ENCODE measurements at regions of chr10 and their contacts with region 1.

Region 1: GRCh38 chr10:88932539-88933256 is 19.9 kb downstream of the ACTA2 start:
- DNase-seq: peak; percentile 67
- H3K4me3 ChIP-seq: no peak overlapping the region
- CTCF ChIP-seq: peak; percentile 74

Region 2: GRCh38 chr10:88687853-88688467 is 244.7 kb before region 1 on chr10:
- CTCF ChIA-PET with region 1: interaction called, 21 read pairs
- POLR2A ChIA-PET with region 1: no interaction called
- DNase-seq: no peak
- H3K4me3 ChIP-seq: no peak overlapping the region
- CTCF ChIP-seq: peak; percentile 55

Region 3: GRCh38 chr10:88851706-88852105 is 81.0 kb before region 1 on chr10 and contains the start of gene ANKRD22:
- CTCF ChIA-PET with region 1: interaction called, 1,009 read pairs
- POLR2A ChIA-PET with region 1: interaction called, 3 read pairs
- DNase-seq: no peak
- H3K4me3 ChIP-seq: no peak within 1 kb of the TSS
- CTCF ChIP-seq: no peak

Region 4: DNA sequence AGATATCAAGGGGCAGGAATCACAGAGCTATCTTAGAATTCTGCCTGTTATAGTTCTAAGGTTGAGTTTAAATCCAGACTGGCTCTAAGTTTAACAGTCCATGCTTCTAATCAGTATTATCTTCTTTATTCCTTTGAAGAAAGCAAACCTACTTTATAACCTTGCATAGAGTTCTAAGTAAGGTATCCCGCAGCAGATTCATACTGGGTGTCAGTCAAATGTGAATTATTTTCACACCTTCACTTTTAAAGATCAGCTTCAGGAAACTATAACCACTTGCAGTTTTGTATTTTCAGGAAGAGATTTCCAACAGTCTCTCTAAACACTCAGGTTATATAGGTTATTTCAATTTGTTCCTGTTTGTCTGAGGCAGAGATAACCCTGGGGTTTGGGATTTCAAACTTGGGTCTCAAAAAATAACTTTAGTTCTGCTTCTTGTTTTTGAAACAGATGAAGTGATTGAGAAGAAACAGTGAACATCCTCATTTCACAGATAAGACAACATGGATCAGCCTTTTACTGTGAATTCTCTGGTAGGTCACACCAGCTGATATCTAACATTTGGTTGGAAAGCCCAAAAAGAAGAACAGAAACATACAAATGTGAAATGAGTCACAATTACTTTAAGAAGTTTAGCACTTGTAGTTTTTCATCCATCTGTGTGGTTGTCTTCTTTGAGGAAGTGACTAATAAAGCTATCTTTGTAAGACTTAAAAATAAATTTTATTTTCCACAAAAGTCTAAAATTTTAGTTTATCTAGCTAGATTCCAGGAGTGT is 31.3 kb before region 1 on chr10:
- CTCF ChIA-PET with region 1: interaction called, 41 read pairs
- POLR2A ChIA-PET with region 1: no interaction called
- DNase-seq: no peak
- H3K4me3 ChIP-seq: no peak overlapping the region
- CTCF ChIP-seq: no peak

Region 5: DNA sequence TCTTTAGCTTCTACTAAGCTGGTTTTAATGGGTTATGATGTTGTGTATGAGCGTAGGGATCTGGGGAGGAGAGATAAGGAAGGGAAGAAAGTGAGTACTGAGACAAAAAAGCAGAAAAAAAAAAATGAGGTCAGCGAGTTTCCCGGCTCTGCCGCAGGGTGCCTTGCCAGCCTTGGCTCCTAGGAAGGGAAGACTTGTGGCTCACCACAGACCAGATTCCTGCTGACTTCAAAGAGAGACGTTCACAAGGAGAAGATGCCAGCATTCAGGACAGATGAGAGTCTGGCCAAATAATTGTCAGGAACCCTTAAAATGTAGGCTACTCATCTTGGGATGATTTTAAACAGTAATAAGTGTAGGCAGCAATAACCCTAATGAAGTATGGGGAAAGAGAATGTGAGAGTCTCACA is 46.5 kb after region 1 on chr10:
- CTCF ChIA-PET with region 1: interaction called, 61 read pairs
- POLR2A ChIA-PET with region 1: no interaction called
- DNase-seq: peak; percentile 76
- H3K4me3 ChIP-seq: no peak overlapping the region
- CTCF ChIP-seq: no peak

Region 6: GRCh38 chr10:89022734-89023133 is 90.0 kb after region 1 on chr10:
- CTCF ChIA-PET with region 1: interaction called, 11 read pairs
- POLR2A ChIA-PET with region 1: no interaction called
- DNase-seq: no peak
- H3K4me3 ChIP-seq: no peak overlapping the region
- CTCF ChIP-seq: no peak

Region 7: GRCh38 chr10:89076120-89076519 is 143.4 kb after region 1 on chr10:
- CTCF ChIA-PET with region 1: no interaction called
- POLR2A ChIA-PET with region 1: no interaction called
- DNase-seq: no peak
- H3K4me3 ChIP-seq: no peak overlapping the region
- CTCF ChIP-seq: no peak

Measured in AG04449 (cell line).